ENCODE measurements at regions of chr11 and their contacts with region 1.

Region 1: DNA sequence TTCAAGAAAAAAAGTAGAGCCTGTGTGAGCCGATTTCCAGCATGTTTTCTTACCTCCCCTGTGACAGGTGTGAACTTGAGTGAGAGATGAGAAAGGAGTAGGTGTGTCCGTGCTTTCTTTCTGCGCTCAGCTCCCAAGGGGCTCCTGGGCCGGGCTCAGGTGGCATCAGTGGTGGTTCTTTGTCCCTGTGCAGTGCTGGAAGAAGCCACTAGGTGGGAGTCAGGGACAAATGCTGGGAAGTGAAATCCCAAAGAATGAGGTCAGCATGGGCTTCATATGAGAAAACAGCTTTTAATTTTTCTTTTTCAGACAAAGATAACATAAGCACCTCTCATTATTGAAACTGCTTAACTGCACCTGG is 57.8 kb downstream of the PPFIBP2 start:
- H3K4me3 ChIP-seq: no peak overlapping the region
- H3K27ac ChIP-seq: no peak overlapping the region
- H3K4me1 ChIP-seq: no peaks in the 10 kb centered on the region
- CTCF ChIP-seq: peak; percentile 34; the same call in 1 of the 2 replicates

Region 2: DNA sequence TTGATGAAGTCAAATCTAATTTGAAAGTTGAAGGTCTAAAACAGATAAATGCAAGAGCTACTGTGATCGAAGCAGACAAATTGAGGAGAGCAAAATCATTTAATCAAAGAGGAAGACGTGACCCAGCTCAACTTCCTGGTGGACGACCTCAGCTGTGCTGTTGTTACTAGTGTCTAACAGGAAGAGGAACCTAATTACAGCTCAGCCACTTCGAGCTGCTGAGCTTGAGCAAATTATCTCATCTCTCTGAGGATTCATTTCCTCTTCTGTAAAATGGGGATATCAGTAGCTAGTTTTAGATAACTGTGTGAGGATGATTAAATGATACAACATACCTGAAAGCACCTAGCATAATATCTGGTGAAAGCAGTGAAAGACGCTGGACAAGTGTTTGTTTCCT is 135.0 kb before region 1 on chr11:
- CTCF ChIA-PET with region 1: no interaction called
- POLR2A ChIA-PET with region 1: no interaction called
- H3K4me3 ChIP-seq: no peak overlapping the region
- H3K27ac ChIP-seq: no peak overlapping the region
- H3K4me1 ChIP-seq: no peaks in the 10 kb centered on the region
- CTCF ChIP-seq: no peak

Region 3: GRCh38 chr11:7485186-7486097 is 86.2 kb before region 1 on chr11 and contains the start of gene OLFML1:
- CTCF ChIA-PET with region 1: no interaction called
- POLR2A ChIA-PET with region 1: no interaction called
- H3K4me3 ChIP-seq: no peak within 1 kb of the TSS
- H3K27ac ChIP-seq: no peak within 1 kb of the TSS
- H3K4me1 ChIP-seq: no peaks in the 10 kb centered on the region
- CTCF ChIP-seq: no peak

Region 4: DNA sequence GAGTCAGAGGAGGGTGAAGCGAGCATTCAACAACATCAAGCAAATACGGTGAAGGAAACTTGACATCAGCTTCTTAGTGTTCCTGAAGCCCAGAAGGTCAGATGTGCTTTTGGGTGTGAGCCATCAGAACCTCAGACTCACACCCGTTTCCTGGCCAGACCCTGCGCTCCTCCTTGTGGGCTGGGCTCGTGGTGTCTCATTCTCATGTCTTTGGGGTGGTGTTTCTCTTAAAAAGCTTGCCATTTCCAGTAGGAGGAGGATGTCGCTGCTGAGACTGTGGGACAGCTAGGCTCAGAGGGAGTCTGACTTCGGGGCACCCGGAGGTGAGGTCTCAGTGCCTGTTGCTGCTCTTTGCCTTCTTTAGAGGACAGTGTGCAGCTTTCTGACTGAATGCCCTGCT is 33.6 kb before region 1 on chr11:
- CTCF ChIA-PET with region 1: interaction called, 13 read pairs
- POLR2A ChIA-PET with region 1: no interaction called
- H3K4me3 ChIP-seq: no peak overlapping the region
- H3K27ac ChIP-seq: no peak overlapping the region
- H3K4me1 ChIP-seq: no peaks in the 10 kb centered on the region
- CTCF ChIP-seq: no peak

Region 5: GRCh38 chr11:7582338-7582985 is 10.8 kb after region 1 on chr11:
- CTCF ChIA-PET with region 1: interaction called, 23 read pairs
- POLR2A ChIA-PET with region 1: no interaction called
- H3K4me3 ChIP-seq: no peak overlapping the region
- H3K27ac ChIP-seq: no peak overlapping the region
- H3K4me1 ChIP-seq: no peaks in the 10 kb centered on the region
- CTCF ChIP-seq: no peak

Region 6: GRCh38 chr11:7657306-7658025 is 85.8 kb after region 1 on chr11:
- CTCF ChIA-PET with region 1: interaction called, 124 read pairs
- POLR2A ChIA-PET with region 1: no interaction called
- H3K4me3 ChIP-seq: no peak overlapping the region
- H3K27ac ChIP-seq: no peak overlapping the region
- H3K4me1 ChIP-seq: no peaks in the 10 kb centered on the region
- CTCF ChIP-seq: peak; percentile 82

Region 7: DNA sequence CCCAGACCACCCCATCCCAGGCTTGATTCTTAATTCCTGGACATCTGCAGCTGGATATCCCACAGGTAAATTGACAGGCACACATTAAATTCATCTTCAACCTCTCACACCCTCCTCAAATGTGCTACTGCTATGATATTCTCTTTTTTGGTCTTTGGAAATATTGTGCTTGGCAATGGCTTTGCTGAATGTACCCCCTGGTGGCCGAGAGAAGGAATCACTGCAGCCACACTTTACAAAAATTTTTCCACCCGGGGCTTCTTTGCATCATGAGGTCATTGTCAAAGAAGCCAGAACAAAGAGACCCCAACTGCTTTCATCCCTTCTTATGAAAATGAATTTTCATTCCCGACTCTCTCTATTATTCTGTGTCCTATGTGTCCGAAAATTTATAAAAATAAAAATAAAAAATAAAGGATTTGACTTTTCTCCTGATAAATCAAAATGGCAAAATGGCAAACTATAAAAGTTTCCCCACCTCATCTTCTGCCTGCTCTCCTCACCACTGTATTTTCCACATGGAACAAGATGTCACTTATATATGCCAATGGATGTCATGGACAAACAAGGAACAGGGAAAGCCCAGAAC is 116.7 kb after region 1 on chr11:
- CTCF ChIA-PET with region 1: interaction called, 26 read pairs
- POLR2A ChIA-PET with region 1: no interaction called
- H3K4me3 ChIP-seq: no peak overlapping the region
- H3K27ac ChIP-seq: no peak overlapping the region
- H3K4me1 ChIP-seq: no peaks in the 10 kb centered on the region; the same call in none of the 2 replicates
- CTCF ChIP-seq: no peak

Region 8: GRCh38 chr11:7851391-7851790 is 279.8 kb after region 1 on chr11:
- CTCF ChIA-PET with region 1: no interaction called
- POLR2A ChIA-PET with region 1: no interaction called
- H3K4me3 ChIP-seq: no peak overlapping the region
- H3K27ac ChIP-seq: no peak overlapping the region
- H3K4me1 ChIP-seq: no peaks in the 10 kb centered on the region
- CTCF ChIP-seq: no peak

Measured in HEK293 (cell line).